ENCODE measurements at regions of chr10 and their contacts with region 1.

Region 1: GRCh38 chr10:71212318-71213126 is at the start of gene UNC5B:
- DNase-seq: no peak
- ATAC-seq: peak; percentile 66
- H3K4me3 ChIP-seq: no peak within 1 kb of the TSS
- H3K27ac ChIP-seq: no peak within 1 kb of the TSS
- H3K4me1 ChIP-seq: no peaks in the 10 kb centered on the region
- H3K27me3 ChIP-seq: peaks cover 16 to 18% of the 10 kb centered on the region in 2 experiments
- CTCF ChIP-seq: no peak
- EP300 ChIP-seq: no peak
- POLR2A ChIP-seq: no peak
- RAD21 ChIP-seq: no peak
- polyA plus RNA-seq, gene UNC5B: not detected

Region 2: DNA sequence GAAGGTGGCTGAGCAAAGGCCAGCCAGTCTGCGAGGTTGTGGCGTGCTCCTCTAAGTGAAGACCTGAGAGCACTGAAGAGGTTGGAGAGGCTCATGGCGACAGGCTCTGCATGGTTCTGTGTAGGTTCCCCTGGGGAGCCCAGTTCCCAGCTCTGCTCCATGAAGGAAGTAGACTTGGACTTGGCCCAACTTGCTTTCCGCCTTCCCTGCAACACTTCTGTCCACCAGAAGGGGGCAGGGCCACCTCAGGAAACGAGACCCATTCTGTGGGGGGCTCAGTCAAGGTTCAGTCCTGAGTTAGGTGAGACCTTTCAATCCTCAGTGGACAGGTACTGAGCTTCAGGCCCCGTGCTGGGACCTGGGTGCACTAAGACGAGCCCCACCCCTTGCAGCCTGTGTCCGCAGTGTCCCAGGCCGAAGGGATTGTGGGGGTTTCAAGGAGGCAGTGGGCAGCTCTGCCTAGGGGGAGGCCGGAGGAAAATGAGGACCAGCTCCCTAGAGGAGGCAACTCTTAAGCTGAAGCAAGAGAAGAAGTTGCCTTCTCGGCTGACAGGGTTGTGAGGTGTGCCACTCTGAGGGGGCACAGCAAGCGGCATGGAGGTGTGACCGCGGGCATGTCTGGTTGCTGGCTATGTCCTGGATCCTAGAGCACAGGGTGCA is 309.1 kb before region 1 on chr10:
- CTCF ChIA-PET with region 1: interaction called, 7 read pairs
- POLR2A ChIA-PET with region 1: no interaction called
- RAD21 ChIA-PET with region 1: interaction called, 4 read pairs
- SMC1A ChIA-PET with region 1: no interaction called
- in situ Hi-C with region 1: no loop called
- intact Hi-C with region 1: loop called (anchors 1 kb)
- DNase-seq: no peak
- ATAC-seq: peak; percentile 64
- H3K4me3 ChIP-seq: no peak overlapping the region
- H3K27ac ChIP-seq: no peak overlapping the region
- H3K4me1 ChIP-seq: no peaks in the 10 kb centered on the region
- H3K27me3 ChIP-seq: peaks cover 2% of the 10 kb centered on the region in 2 experiments; a peak in 1 of 4 replicates
- CTCF ChIP-seq: peak; percentile 76 to 87 (median 82)
- EP300 ChIP-seq: no peak
- POLR2A ChIP-seq: no peak
- RAD21 ChIP-seq: peak; percentile 78

Region 3: GRCh38 chr10:70920565-70920964 is 292.0 kb before region 1 on chr10:
- CTCF ChIA-PET with region 1: interaction called, 22 read pairs
- POLR2A ChIA-PET with region 1: no interaction called
- RAD21 ChIA-PET with region 1: no interaction called
- SMC1A ChIA-PET with region 1: interaction called, 4 read pairs
- in situ Hi-C with region 1: loop called (anchors 5 kb)
- intact Hi-C with region 1: loop called (anchors 1 kb)
- DNase-seq: no peak
- ATAC-seq: no peak
- H3K4me3 ChIP-seq: no peak overlapping the region
- H3K27ac ChIP-seq: no peak overlapping the region
- H3K4me1 ChIP-seq: no peaks in the 10 kb centered on the region
- H3K27me3 ChIP-seq: peaks cover 0 to 3% of the 10 kb centered on the region in 2 experiments; a peak in 3 of 4 replicates
- CTCF ChIP-seq: no peak
- EP300 ChIP-seq: no peak
- POLR2A ChIP-seq: no peak
- RAD21 ChIP-seq: no peak

Region 4: GRCh38 chr10:71116426-71116825 is 96.1 kb before region 1 on chr10:
- CTCF ChIA-PET with region 1: no interaction called
- POLR2A ChIA-PET with region 1: no interaction called
- RAD21 ChIA-PET with region 1: no interaction called
- SMC1A ChIA-PET with region 1: no interaction called
- in situ Hi-C with region 1: no loop called
- intact Hi-C with region 1: no loop called
- DNase-seq: no peak
- ATAC-seq: no peak
- H3K4me3 ChIP-seq: no peak overlapping the region
- H3K27ac ChIP-seq: no peak overlapping the region
- H3K4me1 ChIP-seq: no peaks in the 10 kb centered on the region
- H3K27me3 ChIP-seq: no peaks in the 10 kb centered on the region
- CTCF ChIP-seq: no peak
- EP300 ChIP-seq: no peak
- POLR2A ChIP-seq: no peak
- RAD21 ChIP-seq: no peak

Measured in GM12878 (cell line).